ENCODE measurements at regions of chr7 and their contacts with region 1.

Region 1: GRCh38 chr7:93551063-93551904 is 23.2 kb downstream of the CALCR start:
- DNase-seq: peak; percentile 22
- ATAC-seq: no peak
- H3K4me3 Mint-ChIP-seq: no peak overlapping the region
- H3K27ac Mint-ChIP-seq: no peak overlapping the region
- H3K4me1 Mint-ChIP-seq: no peaks in the 10 kb centered on the region
- H3K27me3 Mint-ChIP-seq: peaks cover 4% of the 10 kb centered on the region

Region 2: GRCh38 chr7:93238748-93239147 is 312.5 kb before region 1 on chr7:
- CTCF ChIA-PET with region 1: interaction called, 21 read pairs
- POLR2A ChIA-PET with region 1: no interaction called
- DNase-seq: no peak
- ATAC-seq: no peak
- H3K4me3 Mint-ChIP-seq: no peak overlapping the region
- H3K27ac Mint-ChIP-seq: no peak overlapping the region
- H3K4me1 Mint-ChIP-seq: peaks cover under 1% of the 10 kb centered on the region
- H3K27me3 Mint-ChIP-seq: no peaks in the 10 kb centered on the region

Region 3: GRCh38 chr7:93245525-93246432 is 305.5 kb before region 1 on chr7:
- CTCF ChIA-PET with region 1: interaction called, 29 read pairs
- POLR2A ChIA-PET with region 1: no interaction called
- DNase-seq: no peak
- ATAC-seq: no peak
- H3K4me3 Mint-ChIP-seq: no peak overlapping the region
- H3K27ac Mint-ChIP-seq: no peak overlapping the region
- H3K4me1 Mint-ChIP-seq: no peaks in the 10 kb centered on the region
- H3K27me3 Mint-ChIP-seq: no peaks in the 10 kb centered on the region

Region 4: GRCh38 chr7:93592588-93593266 is 41.4 kb after region 1 on chr7:
- CTCF ChIA-PET with region 1: no interaction called
- POLR2A ChIA-PET with region 1: no interaction called
- DNase-seq: no peak
- ATAC-seq: no peak
- H3K4me3 Mint-ChIP-seq: no peak overlapping the region
- H3K27ac Mint-ChIP-seq: no peak overlapping the region
- H3K4me1 Mint-ChIP-seq: no peaks in the 10 kb centered on the region
- H3K27me3 Mint-ChIP-seq: no peaks in the 10 kb centered on the region